CD14-positive monocyte (primary cell): ENCODE measurements at regions of chr9 and their contacts with region 1.

Region 1: GRCh38 chr9:97964901-97965300 is 18.2 kb upstream of the ANP32B start:
- DNase-seq: no peak
- H3K4me3 ChIP-seq: no peak overlapping the region
- H3K4me3 Mint-ChIP-seq: no peak overlapping the region
- H3K27ac ChIP-seq: no peak overlapping the region
- H3K27ac Mint-ChIP-seq: no peak overlapping the region
- H3K4me1 ChIP-seq: no peaks in the 10 kb centered on the region
- H3K4me1 Mint-ChIP-seq: no peaks in the 10 kb centered on the region
- H3K27me3 ChIP-seq: no peaks in the 10 kb centered on the region
- H3K27me3 Mint-ChIP-seq: peaks cover 0 to 2% (median 2%) of the 10 kb centered on the region in 3 donors
- CTCF ChIP-seq: no peak

Region 2: DNA sequence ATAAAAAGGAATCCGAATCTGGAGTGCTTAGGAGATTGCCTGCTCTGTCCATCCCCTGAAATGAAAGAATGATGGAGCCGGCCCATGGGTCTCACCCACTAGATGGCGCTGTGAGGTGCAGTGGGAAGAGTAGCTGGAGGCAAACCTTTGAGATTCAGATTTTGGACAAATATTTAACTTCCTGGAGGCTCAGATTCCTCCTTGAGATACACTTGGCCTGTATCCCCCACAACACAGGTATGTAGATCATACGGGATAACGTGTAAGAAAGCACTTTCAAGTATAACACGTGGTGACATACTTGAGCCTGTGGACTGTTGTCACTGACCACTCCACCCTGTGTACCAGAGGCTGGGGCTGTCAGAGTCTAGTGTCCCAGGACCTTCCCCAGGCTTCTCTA is 74.9 kb before region 1 on chr9:
- intact Hi-C with region 1: no loop called
- DNase-seq: peak; percentile 46 to 59 (median 49)
- H3K4me3 ChIP-seq: no peak overlapping the region
- H3K4me3 Mint-ChIP-seq: no peak overlapping the region
- H3K27ac ChIP-seq: no peak overlapping the region
- H3K27ac Mint-ChIP-seq: no peak overlapping the region
- H3K4me1 ChIP-seq: no peaks in the 10 kb centered on the region
- H3K4me1 Mint-ChIP-seq: peaks cover 3% of the 10 kb centered on the region
- H3K27me3 ChIP-seq: no peaks in the 10 kb centered on the region
- H3K27me3 Mint-ChIP-seq: peaks cover 0 to 10% (median 4%) of the 10 kb centered on the region in 3 donors
- CTCF ChIP-seq: peak; percentile 85

Region 3: GRCh38 chr9:98021306-98022040 is 56.6 kb after region 1 on chr9:
- intact Hi-C with region 1: loop called in 1 of 2 experiments (anchors 2 kb)
- DNase-seq: no peak
- H3K4me3 ChIP-seq: no peak overlapping the region
- H3K4me3 Mint-ChIP-seq: no peak overlapping the region
- H3K27ac ChIP-seq: peak overlapping the region in 1 of 2 donors; percentile 36
- H3K27ac Mint-ChIP-seq: peak overlapping the region in 4 of 7 donors; percentile 15 to 57 (median 34)
- H3K4me1 ChIP-seq: peaks cover 0 to 6% of the 10 kb centered on the region in 2 donors
- H3K4me1 Mint-ChIP-seq: peaks cover 11% of the 10 kb centered on the region
- H3K27me3 ChIP-seq: no peaks in the 10 kb centered on the region
- H3K27me3 Mint-ChIP-seq: no peaks in the 10 kb centered on the region
- CTCF ChIP-seq: no peak

Region 4: GRCh38 chr9:98707166-98708102 is 742.5 kb after region 1 on chr9:
- intact Hi-C with region 1: no loop called
- DNase-seq: no peak
- H3K4me3 ChIP-seq: no peak overlapping the region
- H3K4me3 Mint-ChIP-seq: peak overlapping the region in 1 of 2 donors; percentile 82
- H3K27ac ChIP-seq: no peak overlapping the region
- H3K27ac Mint-ChIP-seq: no peak overlapping the region
- H3K4me1 ChIP-seq: peaks cover 0 to 7% of the 10 kb centered on the region in 2 donors
- H3K4me1 Mint-ChIP-seq: peaks cover 9% of the 10 kb centered on the region
- H3K27me3 ChIP-seq: peaks cover 48 to 79% of the 10 kb centered on the region in 2 donors
- H3K27me3 Mint-ChIP-seq: peaks cover 74 to 87% (median 77%) of the 10 kb centered on the region in 3 donors
- CTCF ChIP-seq: no peak